Mammary epithelial cell (primary cell): ENCODE measurements at regions of chr12 and their contacts with region 1.

Region 1: DNA sequence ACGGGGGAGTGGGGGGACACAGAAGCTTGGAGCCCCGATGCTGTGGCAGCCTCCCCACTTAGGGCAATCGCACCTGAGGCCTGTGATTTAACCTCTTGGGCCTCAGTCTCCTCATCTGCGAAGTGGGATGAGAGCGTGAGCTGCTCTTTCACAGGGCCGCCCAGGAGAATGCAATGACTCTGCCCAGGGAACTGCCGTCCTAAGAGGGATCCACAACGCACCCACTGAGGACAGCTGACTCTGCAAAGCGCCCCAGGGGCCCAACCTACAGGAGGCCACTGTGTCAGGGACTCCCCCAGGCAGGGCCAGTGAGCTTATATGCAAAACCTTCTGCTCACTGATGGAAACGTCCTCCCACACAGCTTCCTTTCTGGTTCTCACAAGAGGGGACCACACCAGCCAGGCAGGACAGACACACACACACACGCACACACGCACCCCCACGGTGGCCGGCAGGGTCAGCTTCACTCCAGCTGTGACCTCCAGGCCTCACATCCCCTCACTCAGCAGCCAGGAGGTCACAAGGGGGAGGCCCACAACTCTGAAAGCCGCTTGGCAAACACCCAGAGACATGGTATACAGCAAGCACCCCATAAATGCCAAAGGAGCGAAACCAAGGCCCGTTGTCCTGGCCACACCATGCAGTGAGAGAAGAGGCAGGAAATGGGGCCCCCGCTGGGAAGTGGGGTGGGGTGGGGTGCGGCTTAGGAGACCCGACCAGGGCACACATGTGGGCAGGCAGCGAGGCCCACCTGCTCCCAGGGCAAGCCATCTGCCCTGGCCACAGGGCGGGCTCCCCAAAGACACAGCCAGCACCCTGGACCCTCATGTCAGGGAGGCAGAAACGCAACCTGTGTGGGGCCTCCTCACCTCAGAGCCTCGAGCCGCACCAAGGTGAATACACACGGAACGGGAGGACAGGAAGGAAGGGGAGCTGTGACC is 73.3 kb downstream of the NCOR2 start:
- DNase-seq: no peak
- H3K4me3 ChIP-seq: no peak overlapping the region
- H3K27ac ChIP-seq: no peak overlapping the region
- H3K4me1 ChIP-seq: peaks cover 34% of the 10 kb centered on the region
- H3K27me3 ChIP-seq: no peaks in the 10 kb centered on the region
- CTCF ChIP-seq: no peak

Region 2: DNA sequence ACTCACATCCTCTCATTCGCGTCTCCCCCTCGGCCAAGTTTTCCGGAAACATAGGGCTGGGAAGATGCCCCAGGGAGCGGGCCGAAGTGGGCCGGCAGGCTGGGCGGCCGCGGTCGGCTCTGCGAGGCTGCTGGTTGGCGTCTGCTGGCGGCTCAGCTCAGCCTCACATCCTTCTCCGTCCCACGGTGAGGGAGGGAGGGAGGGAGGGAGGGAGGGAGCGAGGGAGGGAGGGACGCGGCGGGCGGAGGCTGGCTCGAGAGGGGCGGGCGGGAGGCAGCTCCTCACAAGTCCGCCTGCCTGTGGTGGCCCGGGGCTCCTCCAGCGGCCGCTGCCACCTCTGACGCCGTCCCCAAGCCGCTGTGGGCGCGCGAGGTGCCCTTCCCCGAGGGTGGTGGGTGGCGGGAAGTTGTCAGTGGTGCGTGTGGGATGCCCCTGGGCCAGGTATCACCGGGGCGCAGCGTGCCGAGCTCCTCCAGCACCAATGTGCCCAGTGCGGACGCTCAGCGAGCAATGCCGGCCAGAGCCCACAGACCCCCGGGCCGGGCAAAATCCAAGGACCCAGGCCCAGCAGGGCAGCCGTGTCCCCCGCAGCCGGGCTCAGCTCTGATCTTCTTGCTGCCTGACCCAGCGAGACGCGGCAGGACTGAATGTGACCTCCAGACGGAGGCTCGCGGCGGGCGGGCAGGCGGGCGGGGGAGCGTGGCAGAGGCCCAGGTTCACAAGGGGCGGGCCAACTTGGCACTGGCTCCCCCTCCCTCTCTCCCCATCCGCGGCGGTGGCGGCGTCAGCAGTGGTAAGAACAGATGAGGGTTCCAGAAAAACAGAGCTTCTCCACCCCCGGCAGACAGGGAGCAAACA is 105.2 kb before region 1 on chr12:
- CTCF ChIA-PET with region 1: no interaction called
- dilution Hi-C with region 1: loop called (anchors 10 kb)
- in situ Hi-C with region 1: no loop called
- intact Hi-C with region 1: no loop called
- DNase-seq: peak; percentile 69
- H3K4me3 ChIP-seq: peak overlapping the region in 2 of 3 experiments; percentile 22 to 32
- H3K27ac ChIP-seq: no peak overlapping the region
- H3K4me1 ChIP-seq: peaks cover 53% of the 10 kb centered on the region
- H3K27me3 ChIP-seq: no peaks in the 10 kb centered on the region
- CTCF ChIP-seq: no peak

Region 3: GRCh38 chr12:124411281-124411878 is 82.7 kb before region 1 on chr12:
- CTCF ChIA-PET with region 1: no interaction called
- dilution Hi-C with region 1: loop called (anchors 5 kb)
- in situ Hi-C with region 1: no loop called
- intact Hi-C with region 1: no loop called
- DNase-seq: peak; percentile 87
- H3K4me3 ChIP-seq: no peak overlapping the region
- H3K27ac ChIP-seq: no peak overlapping the region
- H3K4me1 ChIP-seq: peaks cover 23% of the 10 kb centered on the region
- H3K27me3 ChIP-seq: no peaks in the 10 kb centered on the region
- CTCF ChIP-seq: no peak

Region 4: GRCh38 chr12:124441443-124442194 is 52.5 kb before region 1 on chr12:
- CTCF ChIA-PET with region 1: no interaction called
- dilution Hi-C with region 1: loop called (anchors 5 kb)
- in situ Hi-C with region 1: no loop called
- intact Hi-C with region 1: no loop called
- DNase-seq: no peak
- H3K4me3 ChIP-seq: no peak overlapping the region
- H3K27ac ChIP-seq: no peak overlapping the region
- H3K4me1 ChIP-seq: peaks cover 6% of the 10 kb centered on the region
- H3K27me3 ChIP-seq: no peaks in the 10 kb centered on the region
- CTCF ChIP-seq: no peak

Region 5: GRCh38 chr12:124512667-124513296 is 18.7 kb after region 1 on chr12:
- CTCF ChIA-PET with region 1: no interaction called
- dilution Hi-C with region 1: no loop called
- in situ Hi-C with region 1: no loop called
- intact Hi-C with region 1: loop called (anchors 2 kb)
- DNase-seq: peak; percentile 95
- H3K4me3 ChIP-seq: peak overlapping the region in 1 of 3 experiments; percentile 11
- H3K27ac ChIP-seq: peak overlapping the region; percentile 62
- H3K4me1 ChIP-seq: peaks cover 88% of the 10 kb centered on the region
- H3K27me3 ChIP-seq: no peaks in the 10 kb centered on the region
- CTCF ChIP-seq: no peak

Region 6: GRCh38 chr12:124740691-124741137 is 246.6 kb after region 1 on chr12:
- CTCF ChIA-PET with region 1: no interaction called
- dilution Hi-C with region 1: loop called (anchors 5 kb)
- in situ Hi-C with region 1: no loop called
- intact Hi-C with region 1: no loop called
- DNase-seq: peak; percentile 83
- H3K4me3 ChIP-seq: no peak overlapping the region
- H3K27ac ChIP-seq: no peak overlapping the region
- H3K4me1 ChIP-seq: peaks cover 15% of the 10 kb centered on the region
- H3K27me3 ChIP-seq: no peaks in the 10 kb centered on the region
- CTCF ChIP-seq: peak; percentile 28 to 58